ENCODE measurements at regions of chr1 and their contacts with region 1.

Region 1: GRCh38 chr1:39026051-39026865 is at the start of gene NDUFS5:
- DNase-seq: peak; percentile 78
- H3K27ac ChIP-seq: peak within 1 kb of the TSS; percentile 95
- CTCF ChIP-seq: no peak

Region 2: DNA sequence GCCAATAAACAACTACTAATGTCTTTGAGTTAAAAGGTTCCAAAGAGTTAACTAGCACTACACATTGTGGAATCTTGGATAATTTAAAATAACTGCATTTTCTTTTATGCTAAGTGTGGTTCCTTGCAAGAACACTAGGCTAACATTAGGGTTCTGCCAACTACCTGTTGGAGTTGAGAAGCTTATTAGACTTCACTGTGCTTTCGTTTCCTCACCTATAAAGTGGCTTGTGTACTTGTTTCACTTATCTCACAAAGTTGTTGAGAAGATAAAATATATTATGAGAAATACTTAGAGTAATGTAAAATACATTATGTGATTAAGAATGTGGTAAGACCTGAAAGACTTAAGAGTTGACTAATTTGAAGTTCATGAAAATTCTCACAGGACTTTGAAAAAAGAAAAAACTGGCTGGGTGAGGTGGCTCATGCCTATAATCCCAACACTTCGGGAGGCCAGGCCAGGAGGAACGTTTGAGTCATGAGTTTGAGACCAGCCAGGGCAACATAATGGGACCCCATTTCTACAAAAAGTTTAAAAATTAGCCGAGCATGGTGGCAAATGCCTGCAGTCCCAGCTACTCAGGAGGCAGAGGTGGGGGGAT is 161.0 kb before region 1 on chr1:
- CTCF ChIA-PET with region 1: no interaction called
- POLR2A ChIA-PET with region 1: no interaction called
- DNase-seq: no peak
- H3K27ac ChIP-seq: no peak overlapping the region
- CTCF ChIP-seq: no peak

Region 3: GRCh38 chr1:38990738-38991639 is 35.3 kb before region 1 on chr1 and contains the start of gene AKIRIN1:
- CTCF ChIA-PET with region 1: no interaction called
- POLR2A ChIA-PET with region 1: no interaction called
- DNase-seq: peak; percentile 96
- H3K27ac ChIP-seq: peak within 1 kb of the TSS; percentile 76
- CTCF ChIP-seq: no peak

Region 4: DNA sequence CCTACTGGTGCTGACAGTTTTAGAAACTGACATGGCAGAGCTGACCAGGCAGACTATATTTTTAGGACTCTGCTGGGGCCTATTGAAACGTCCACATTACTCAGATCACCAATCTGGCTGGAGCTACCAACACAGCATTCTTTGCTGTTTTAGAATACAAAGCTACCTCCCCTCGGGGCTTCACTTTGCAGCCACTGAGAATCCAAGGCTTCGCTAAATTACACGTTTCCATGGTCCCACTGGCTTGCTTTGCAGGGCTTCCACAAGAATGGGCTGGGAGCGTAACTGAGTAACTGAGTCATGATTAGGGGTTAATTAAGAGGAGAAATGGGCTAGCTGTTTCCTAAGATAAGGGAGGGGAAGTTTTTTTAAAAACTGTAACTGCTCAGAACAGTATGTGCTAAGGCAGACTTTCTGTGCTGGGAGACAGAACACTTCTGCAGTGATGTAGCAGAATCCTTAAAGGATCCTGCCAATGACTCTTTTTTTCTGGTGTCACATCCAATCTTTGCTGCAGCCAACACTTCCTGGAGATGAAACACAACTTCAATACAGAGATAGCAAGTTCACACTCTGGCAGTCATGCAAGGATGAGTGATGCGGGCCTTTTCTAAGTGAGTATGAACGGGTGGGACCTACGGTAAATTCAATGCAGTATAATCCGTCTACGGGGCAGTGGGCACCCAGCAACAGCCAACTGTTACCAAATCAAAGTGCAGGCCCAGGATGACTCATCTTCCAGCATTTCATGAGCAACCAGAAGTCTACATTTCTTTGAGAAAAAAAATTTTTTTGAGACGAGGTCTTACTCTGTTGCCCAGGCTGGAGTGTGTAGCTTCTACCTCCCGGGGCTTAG is 21.3 kb after region 1 on chr1:
- CTCF ChIA-PET with region 1: no interaction called
- POLR2A ChIA-PET with region 1: no interaction called
- DNase-seq: peak; percentile 38
- H3K27ac ChIP-seq: peak overlapping the region; percentile 21; the same call in 1 of the 2 replicates
- CTCF ChIP-seq: no peak

Region 5: DNA sequence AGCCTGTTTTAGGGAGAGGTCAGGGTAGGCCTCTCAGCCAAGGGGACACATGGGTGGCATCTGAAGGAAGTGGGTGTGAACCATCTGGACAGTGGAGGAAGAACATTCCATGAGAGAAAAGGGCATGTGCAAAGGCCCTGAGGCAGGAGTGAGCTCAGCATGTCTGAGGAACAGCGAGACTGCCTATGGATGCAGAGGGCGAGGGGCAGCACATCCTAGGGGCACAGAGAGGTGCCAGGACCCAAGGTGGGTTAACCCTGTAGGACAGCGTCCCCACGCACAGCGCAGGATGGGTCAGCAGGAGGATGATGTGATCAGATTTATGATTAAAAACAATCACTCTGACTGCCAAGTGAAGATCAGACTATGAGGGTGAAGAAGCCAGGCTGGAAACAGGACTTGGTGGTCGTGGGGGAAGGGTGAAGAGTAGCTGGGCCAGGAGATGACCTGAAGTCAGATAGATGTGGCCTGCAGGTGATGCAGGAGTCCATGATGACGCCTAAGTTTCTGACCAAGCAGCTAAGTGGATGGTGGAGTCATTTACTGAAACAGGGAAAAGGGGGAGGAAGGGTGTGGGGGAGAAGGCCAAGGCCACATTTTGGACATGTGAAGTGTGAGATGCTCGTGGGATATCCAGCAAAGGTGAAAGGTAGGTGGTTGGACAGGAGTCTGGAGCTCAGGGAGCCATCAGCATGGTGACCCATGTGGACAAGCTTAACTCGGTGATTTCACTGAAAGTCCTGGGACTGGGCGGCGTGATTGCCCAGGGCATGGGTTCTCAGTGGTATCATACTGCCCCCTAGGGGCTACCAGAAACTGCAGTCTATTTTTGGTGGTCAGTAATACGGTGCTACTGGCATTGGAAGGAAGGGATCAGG is 512.6 kb after region 1 on chr1:
- CTCF ChIA-PET with region 1: interaction called, 11 read pairs
- POLR2A ChIA-PET with region 1: interaction called, 4 read pairs
- DNase-seq: peak; percentile 67
- H3K27ac ChIP-seq: no peak overlapping the region
- CTCF ChIP-seq: peak; percentile 77